Endothelial cell of umbilical vein (primary cell): ENCODE measurements at regions of chr9 and their contacts with region 1.

Region 1: DNA sequence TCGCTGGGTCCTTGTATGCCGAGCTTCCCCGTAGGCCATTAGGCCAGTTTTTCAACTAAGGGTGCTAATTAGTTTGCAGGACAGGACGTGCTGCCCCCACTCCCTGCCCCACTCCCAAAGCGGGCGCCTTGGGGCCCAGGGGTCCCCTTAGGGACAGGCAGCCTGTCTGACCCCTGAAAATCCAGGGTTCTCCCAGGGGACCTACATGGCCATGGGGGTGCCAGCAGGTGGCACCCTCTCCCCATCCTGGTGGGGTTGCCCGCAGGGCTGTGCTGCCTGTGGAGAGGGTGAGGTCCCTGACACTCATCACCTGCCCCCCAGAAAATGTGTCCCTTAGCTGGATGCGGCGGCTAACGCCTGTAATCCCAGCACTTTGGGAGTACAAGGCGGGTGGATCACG is 8.5 kb upstream of the CCDC187 start:
- DNase-seq: peak; percentile 51
- H3K4me3 ChIP-seq: no peak overlapping the region
- H3K27ac ChIP-seq: no peak overlapping the region
- H3K4me1 ChIP-seq: no peaks in the 10 kb centered on the region
- H3K27me3 ChIP-seq: no peaks in the 10 kb centered on the region
- CTCF ChIP-seq: peak; percentile 23 to 83
- POLR2A ChIP-seq: no peak

Region 2: DNA sequence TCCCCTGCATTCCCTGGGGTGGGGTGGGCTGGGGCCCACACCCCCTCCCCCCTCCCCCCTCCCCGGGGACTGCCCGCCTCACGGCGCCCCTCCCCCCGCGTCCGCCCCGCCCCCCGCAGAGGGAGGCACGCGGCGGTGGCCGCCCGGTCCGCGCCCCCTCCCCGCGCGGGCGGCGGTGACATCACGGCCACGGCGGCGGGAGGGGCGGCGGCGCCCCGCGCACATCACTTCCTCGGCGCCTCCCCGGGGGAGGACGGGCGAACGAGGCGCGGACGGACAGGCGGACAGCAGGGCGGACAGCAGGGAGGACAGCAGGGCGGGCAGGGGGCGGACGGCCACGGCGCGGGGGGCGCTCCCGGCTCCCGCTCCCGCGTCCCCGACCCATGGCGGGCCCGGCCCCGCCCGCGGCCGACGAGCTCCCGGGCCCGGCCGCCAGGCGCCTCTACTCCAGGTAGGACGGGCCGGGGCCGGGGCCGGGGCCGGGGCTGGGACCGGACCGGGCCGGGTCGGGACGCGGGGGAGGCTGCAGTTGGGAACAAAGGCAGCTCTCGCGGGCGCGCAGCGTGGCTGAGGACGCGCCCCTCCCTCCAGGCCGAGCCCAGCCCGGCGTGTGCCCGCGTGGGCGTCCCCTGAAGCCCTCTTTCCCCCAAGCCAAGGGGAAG is 15.0 kb after region 1 on chr9 and contains the start of gene GPSM1:
- CTCF ChIA-PET with region 1: interaction called, 22 read pairs
- POLR2A ChIA-PET with region 1: no interaction called
- dilution Hi-C with region 1: no loop called
- intact Hi-C with region 1: no loop called
- DNase-seq: peak; percentile 58
- H3K4me3 ChIP-seq: peak within 1 kb of the TSS; percentile 66 to 80 (median 71)
- H3K27ac ChIP-seq: peak within 1 kb of the TSS; percentile 58
- H3K4me1 ChIP-seq: peaks cover 20% of the 10 kb centered on the region
- H3K27me3 ChIP-seq: no peaks in the 10 kb centered on the region
- CTCF ChIP-seq: no peak
- POLR2A ChIP-seq: peak; percentile 80
- total RNA-seq, gene GPSM1: 42.8 and 47.1 TPM in 2 replicates

Region 3: GRCh38 chr9:136339173-136339957 is 26.9 kb after region 1 on chr9:
- CTCF ChIA-PET with region 1: interaction called, 3 read pairs
- POLR2A ChIA-PET with region 1: no interaction called
- dilution Hi-C with region 1: no loop called
- intact Hi-C with region 1: loop called (anchors 2 kb)
- DNase-seq: peak; percentile 49
- H3K4me3 ChIP-seq: no peak overlapping the region
- H3K27ac ChIP-seq: no peak overlapping the region
- H3K4me1 ChIP-seq: peaks cover 5% of the 10 kb centered on the region
- H3K27me3 ChIP-seq: no peaks in the 10 kb centered on the region
- CTCF ChIP-seq: peak; percentile 92 to 94
- POLR2A ChIP-seq: no peak

Region 4: DNA sequence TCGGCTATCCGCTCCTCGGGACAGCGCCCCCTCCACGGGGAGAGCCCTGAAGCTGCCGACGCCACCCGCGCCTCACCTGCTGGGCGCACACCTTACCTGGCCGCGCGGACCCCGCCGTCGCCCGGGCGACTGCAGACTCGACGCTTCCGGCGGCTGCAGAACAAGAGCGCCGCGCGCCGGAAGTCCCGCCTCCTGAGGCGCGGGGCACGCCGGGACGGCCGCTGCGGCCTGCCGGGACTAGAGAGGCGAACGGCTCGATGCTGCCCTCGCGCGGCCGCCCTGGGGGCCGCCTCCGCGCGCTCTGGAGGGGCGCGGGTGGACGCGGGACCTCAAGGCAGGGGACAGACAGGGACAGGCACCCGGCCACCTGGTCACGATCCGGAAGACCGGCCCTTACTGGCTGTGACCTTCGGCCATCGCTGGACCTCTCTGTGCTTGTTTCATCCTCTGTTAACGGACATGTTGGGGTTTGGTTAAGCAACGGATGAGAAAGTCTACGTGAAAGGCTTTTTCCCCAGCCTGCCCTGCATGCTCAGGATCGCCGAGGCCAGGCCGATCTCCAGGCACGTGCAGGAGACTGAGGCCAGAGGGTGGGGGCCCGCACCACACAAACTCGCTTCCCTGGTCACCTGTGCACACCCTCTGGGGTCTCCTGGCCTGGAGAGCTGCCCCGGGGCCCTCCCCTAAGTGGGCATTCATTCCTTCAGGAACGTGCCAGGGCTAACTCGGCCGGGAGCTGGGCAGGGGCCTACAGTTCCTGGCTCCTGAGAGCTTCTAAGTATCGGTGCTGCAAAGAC is 87.8 kb after region 1 on chr9 and contains the start of gene SNAPC4:
- CTCF ChIA-PET with region 1: interaction called, 22 read pairs
- POLR2A ChIA-PET with region 1: no interaction called
- dilution Hi-C with region 1: no loop called
- intact Hi-C with region 1: loop called (anchors 1 kb)
- DNase-seq: peak; percentile 82
- H3K4me3 ChIP-seq: peak within 1 kb of the TSS; percentile 55 to 96 (median 62)
- H3K27ac ChIP-seq: peak within 1 kb of the TSS; percentile 27
- H3K4me1 ChIP-seq: peaks cover 10% of the 10 kb centered on the region
- H3K27me3 ChIP-seq: no peaks in the 10 kb centered on the region
- CTCF ChIP-seq: peak; percentile 88 to 97
- POLR2A ChIP-seq: peak; percentile 90
- total RNA-seq, gene SNAPC4: 14.7 and 17.5 TPM in 2 replicates